Activated B cell treated with CpG ODN at 0.5 μM for 24 hours (primary cell): ENCODE measurements at regions of chr12 and their contacts with region 1.

Region 1: GRCh38 chr12:64610149-64610678 is at the start of gene RASSF3:
- DNase-seq: peak; percentile 77
- ATAC-seq: peak; percentile 50
- H3K4me3 Mint-ChIP-seq: peak within 1 kb of the TSS; percentile 99
- H3K27ac Mint-ChIP-seq: peak within 1 kb of the TSS; percentile 97
- H3K4me1 Mint-ChIP-seq: peaks cover 44% of the 10 kb centered on the region
- H3K27me3 Mint-ChIP-seq: no peaks in the 10 kb centered on the region
- CTCF ChIP-seq: no peak
- total RNA-seq, gene RASSF3: 90.9 and 95.7 TPM in 2 replicates

Region 2: DNA sequence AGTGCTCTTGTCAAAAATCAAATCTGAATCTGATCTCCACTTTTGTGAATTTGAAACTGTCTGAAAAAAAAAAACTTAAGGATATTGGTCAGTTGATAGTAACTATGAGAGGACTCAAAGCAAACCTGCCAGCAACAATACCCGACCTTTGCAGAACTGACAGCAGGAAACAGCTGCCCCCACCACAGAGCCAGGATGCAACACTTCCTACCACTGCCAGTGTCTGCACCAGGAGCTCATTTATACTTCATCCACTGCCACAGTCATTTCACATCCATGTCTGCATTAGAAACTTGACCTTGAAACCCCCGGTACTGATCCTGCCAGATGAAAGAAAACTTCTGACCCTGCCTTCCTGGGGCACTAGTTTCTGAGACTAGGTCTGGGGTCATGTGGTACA is 857.9 kb before region 1 on chr12:
- CTCF ChIA-PET with region 1: no interaction called
- POLR2A ChIA-PET with region 1: no interaction called
- intact Hi-C with region 1: no loop called
- DNase-seq: no peak
- ATAC-seq: no peak
- H3K4me3 Mint-ChIP-seq: no peak overlapping the region
- H3K27ac Mint-ChIP-seq: no peak overlapping the region
- H3K4me1 Mint-ChIP-seq: no peaks in the 10 kb centered on the region
- H3K27me3 Mint-ChIP-seq: peaks cover 9% of the 10 kb centered on the region
- CTCF ChIP-seq: no peak

Region 3: GRCh38 chr12:63779498-63780481 is 830.4 kb before region 1 on chr12 and contains the start of gene RXYLT1:
- CTCF ChIA-PET with region 1: no interaction called
- POLR2A ChIA-PET with region 1: no interaction called
- intact Hi-C with region 1: no loop called
- DNase-seq: peak; percentile 82
- ATAC-seq: peak; percentile 93
- H3K4me3 Mint-ChIP-seq: peak within 1 kb of the TSS; percentile 98
- H3K27ac Mint-ChIP-seq: peak within 1 kb of the TSS; percentile 90
- H3K4me1 Mint-ChIP-seq: peaks cover 20% of the 10 kb centered on the region
- H3K27me3 Mint-ChIP-seq: no peaks in the 10 kb centered on the region
- CTCF ChIP-seq: no peak
- total RNA-seq, gene RXYLT1: 16.3 and 22.7 TPM in 2 replicates

Region 4: DNA sequence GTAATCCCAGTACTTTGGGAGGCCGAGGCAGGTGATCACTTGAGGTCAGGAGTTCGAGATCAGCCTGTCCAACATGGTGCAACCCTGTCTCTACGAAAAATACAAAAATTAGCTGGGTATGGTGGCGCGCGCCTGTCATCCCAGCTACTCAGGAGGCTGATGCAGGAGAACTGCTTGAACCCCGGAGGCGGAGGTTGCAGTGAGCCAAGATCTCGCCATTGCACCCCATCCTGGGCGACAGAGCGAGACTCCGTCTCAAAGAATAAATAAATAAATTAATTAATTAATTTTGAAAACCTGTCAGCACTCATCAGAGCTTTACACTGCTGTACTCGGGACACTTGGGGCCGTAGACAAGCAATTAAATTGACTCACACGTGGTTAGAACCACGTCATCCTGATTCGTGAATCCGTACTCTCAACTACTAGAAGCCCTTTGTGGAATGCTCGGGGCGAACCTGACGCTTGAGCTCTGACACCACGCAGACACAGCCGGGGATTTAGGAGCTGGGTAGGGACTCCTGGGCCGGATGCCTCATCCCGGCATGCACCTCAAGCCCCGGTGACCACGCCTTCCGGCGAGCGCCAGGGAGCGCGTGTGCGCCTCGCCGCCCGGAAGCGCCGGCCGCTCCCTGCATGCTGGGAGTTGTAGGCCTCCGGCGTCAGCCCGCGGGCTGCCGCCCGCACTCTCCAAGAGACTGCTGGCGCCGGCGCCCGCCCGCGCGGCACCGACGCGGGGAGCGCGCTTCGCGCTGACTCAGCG is 206.3 kb before region 1 on chr12 and contains the start of gene XPOT:
- CTCF ChIA-PET with region 1: no interaction called
- POLR2A ChIA-PET with region 1: no interaction called
- intact Hi-C with region 1: loop called (anchors 1 kb)
- DNase-seq: peak; percentile 88
- ATAC-seq: peak; percentile 91
- H3K4me3 Mint-ChIP-seq: peak within 1 kb of the TSS; percentile 96
- H3K27ac Mint-ChIP-seq: peak within 1 kb of the TSS; percentile 96
- H3K4me1 Mint-ChIP-seq: peaks cover 16% of the 10 kb centered on the region
- H3K27me3 Mint-ChIP-seq: peaks cover 3% of the 10 kb centered on the region
- CTCF ChIP-seq: no peak
- total RNA-seq, gene XPOT: 81.3 and 96.2 TPM in 2 replicates

Region 5: DNA sequence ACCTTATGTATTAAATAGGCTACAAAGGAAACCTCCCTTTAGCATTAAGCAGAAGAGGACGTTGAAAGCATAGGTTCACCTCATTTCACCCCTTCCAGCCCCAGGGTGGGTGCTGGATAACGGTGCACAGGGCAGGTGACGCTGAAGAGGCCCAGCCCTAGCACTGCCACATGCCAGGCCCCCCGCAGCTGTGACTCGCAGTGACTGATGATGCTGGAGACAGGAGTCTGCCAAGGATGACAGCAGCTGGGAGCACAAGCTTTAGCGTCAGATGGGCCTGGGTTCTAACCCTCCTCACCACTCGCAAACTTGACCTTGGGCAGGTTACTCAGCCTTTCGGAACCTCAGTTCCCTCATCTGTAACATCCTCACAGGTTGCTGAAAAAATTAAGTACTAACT is 81.6 kb before region 1 on chr12:
- CTCF ChIA-PET with region 1: no interaction called
- POLR2A ChIA-PET with region 1: no interaction called
- intact Hi-C with region 1: no loop called
- DNase-seq: no peak
- ATAC-seq: no peak
- H3K4me3 Mint-ChIP-seq: no peak overlapping the region
- H3K27ac Mint-ChIP-seq: no peak overlapping the region
- H3K4me1 Mint-ChIP-seq: no peaks in the 10 kb centered on the region
- H3K27me3 Mint-ChIP-seq: no peaks in the 10 kb centered on the region
- CTCF ChIP-seq: no peak

Region 6: DNA sequence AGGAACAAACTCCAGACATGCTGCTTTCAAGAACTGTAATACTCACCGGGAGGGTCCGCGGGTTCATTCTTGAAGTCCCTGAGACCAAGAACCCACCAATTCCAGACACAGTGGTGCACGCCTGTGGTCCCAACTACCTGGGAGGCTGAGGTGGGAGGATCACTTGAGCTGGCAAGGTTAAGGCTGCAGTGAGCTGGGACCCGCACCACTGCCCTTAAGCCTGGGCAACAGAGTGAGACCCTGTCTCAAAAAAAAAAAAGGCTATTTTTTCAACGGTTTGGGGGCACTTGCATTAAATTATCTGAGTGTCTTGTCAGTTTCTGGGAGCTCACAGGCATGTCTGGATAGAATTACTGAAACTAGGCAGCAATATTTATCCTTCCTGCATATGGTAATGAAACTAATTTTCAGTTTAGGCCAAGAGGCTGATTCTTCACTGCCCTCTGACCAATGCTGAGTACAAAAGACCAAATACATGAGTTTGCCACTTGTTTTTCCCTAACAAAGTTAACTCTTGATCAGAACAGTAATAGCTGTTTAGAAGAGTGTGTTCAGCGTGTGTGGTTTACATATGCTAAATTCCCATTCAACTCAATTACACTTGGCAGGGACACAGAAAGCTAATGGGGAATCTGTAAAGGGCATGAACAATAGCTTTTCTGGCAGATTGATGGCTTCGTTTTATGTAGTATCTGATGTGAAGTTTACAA is 65.7 kb before region 1 on chr12:
- CTCF ChIA-PET with region 1: interaction called, 28 read pairs
- POLR2A ChIA-PET with region 1: interaction called, 3 read pairs
- intact Hi-C with region 1: loop called (anchors 1 kb)
- DNase-seq: no peak
- ATAC-seq: no peak
- H3K4me3 Mint-ChIP-seq: no peak overlapping the region
- H3K27ac Mint-ChIP-seq: no peak overlapping the region
- H3K4me1 Mint-ChIP-seq: no peaks in the 10 kb centered on the region
- H3K27me3 Mint-ChIP-seq: peaks cover 5% of the 10 kb centered on the region
- CTCF ChIP-seq: no peak

Region 7: DNA sequence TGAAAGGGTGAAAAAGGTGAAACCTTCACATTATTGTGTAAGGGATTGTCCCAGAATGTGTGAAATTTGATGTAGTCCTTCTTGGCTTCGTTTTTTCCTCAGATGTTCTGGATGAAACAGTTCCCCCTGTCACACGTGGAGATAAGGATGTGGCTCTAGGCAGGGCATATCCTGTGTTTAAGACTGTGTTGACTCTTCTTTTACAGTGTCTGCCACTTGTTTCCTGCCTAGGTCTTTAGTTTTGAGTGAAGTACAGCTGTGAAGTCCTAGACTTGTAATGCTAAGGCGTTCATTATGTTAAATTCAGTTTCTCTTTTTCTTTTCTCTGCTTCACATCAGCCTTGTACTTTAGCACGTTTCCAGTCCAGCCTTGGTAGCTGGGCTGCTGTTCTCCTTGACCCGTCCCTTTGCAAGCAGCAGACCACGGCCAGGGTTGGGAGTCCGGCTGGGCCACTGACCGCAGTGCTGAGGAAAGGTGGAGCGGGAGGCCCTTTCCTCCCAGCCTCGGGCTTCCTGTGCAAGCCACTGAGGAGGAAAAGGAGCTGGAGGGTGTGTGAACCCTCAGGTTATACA is 59.1 kb after region 1 on chr12:
- CTCF ChIA-PET with region 1: interaction called, 3 read pairs
- POLR2A ChIA-PET with region 1: interaction called, 40 read pairs
- intact Hi-C with region 1: loop called (anchors 2 kb)
- DNase-seq: no peak
- ATAC-seq: peak; percentile 67
- H3K4me3 Mint-ChIP-seq: peak overlapping the region; percentile 80
- H3K27ac Mint-ChIP-seq: peak overlapping the region; percentile 84
- H3K4me1 Mint-ChIP-seq: peaks cover 97% of the 10 kb centered on the region
- H3K27me3 Mint-ChIP-seq: no peaks in the 10 kb centered on the region
- CTCF ChIP-seq: no peak

Region 8: GRCh38 chr12:64696080-64696741 is 86.0 kb after region 1 on chr12:
- CTCF ChIA-PET with region 1: interaction called, 23 read pairs
- POLR2A ChIA-PET with region 1: interaction called, 8 read pairs
- intact Hi-C with region 1: loop called (anchors 1 kb)
- DNase-seq: no peak
- ATAC-seq: no peak
- H3K4me3 Mint-ChIP-seq: no peak overlapping the region
- H3K27ac Mint-ChIP-seq: no peak overlapping the region
- H3K4me1 Mint-ChIP-seq: peaks cover 29% of the 10 kb centered on the region
- H3K27me3 Mint-ChIP-seq: no peaks in the 10 kb centered on the region
- CTCF ChIP-seq: no peak